Ascending aorta (tissue), 2 donors: ENCODE measurements at regions of chr17 and their contacts with region 1.

Region 1: DNA sequence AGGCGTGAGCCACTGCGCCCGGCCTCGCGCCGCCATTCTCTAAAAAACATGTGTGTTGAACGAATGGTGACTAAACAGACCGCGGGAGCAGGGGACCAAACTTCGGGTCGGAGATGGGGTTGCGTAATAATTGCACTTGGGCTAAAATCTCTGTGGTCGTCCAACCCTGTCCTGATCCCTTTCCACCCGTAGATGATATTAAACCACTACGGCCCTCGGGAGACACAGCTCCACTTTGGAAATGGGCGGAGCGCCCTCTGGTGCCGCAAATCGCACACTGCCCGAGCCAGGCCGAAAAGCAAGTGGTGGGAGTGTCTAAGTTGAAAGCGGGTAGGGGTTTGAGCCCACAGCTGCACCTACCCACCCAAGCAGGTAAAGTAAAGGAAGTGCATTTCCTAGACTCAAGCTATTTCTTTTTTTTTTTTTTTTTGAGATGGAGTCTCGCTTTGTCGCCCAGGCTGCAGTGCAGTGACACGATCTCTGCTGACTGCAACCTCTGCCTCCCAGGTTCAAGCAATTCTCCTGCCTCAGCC is 17.0 kb downstream of the CAVIN1 start:
- DNase-seq: peak in 1 of 2 donors; percentile 91
- H3K4me3 ChIP-seq: peak overlapping the region in 1 of 2 donors; percentile 2
- H3K27ac ChIP-seq: peak overlapping the region; percentile 76 to 84
- H3K4me1 ChIP-seq: peaks cover 33 to 59% of the 10 kb centered on the region in 2 donors
- H3K27me3 ChIP-seq: no peaks in the 10 kb centered on the region
- CTCF ChIP-seq: peak; percentile 84 to 90 (median 89)

Region 2: DNA sequence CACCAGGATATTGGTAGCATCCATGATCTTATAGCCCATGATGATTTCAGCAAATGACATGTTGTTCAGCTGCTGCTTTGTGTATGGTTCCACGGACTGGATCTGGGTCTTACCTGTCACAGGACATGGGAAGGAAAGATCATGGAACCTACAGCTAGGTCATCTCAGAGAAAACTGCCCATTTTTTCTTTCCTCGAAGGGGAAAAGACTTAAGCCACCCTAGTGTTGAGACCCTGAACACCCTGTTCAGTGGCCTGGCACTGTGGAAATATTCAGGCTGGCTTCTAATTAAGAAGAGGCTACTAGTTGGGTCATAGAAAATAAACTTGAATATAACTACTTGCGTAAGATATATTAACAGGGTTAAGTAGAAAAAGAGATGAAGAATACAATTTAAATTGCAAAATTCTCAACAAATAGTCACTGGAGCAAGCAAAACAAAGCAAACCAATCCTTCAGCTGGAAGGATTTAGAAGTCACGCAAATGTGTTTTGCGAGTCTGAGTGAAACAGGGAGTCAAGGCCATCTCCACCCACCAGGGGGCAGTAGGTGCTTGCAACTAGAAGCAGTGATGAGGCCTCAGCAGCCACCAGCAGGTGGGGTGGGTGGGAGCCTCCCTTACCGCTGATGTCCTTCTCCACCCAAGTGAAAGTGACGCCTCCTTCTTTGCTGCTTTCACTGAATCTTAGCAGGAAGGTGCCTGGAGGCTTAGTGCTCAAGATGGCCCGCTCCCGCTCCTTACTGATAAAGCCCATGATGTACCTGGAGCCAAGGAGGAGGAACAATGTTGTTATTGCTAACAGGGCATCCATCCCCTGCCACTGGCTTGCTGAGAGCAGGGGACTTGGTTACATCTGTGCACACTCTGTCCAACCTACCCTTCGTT is 83.4 kb before region 1 on chr17:
- intact Hi-C with region 1: loop called (anchors 1 kb)
- DNase-seq: peak; percentile 63 to 97
- H3K4me3 ChIP-seq: no peak overlapping the region
- H3K27ac ChIP-seq: peak overlapping the region; percentile 6 to 48
- H3K4me1 ChIP-seq: peaks cover 0 to 6% of the 10 kb centered on the region in 2 donors
- H3K27me3 ChIP-seq: no peaks in the 10 kb centered on the region
- CTCF ChIP-seq: peak; percentile 94 to 99 (median 99)